Sigmoid colon (tissue), 7 donors: ENCODE measurements at regions of chr15 and their contacts with region 1.

Region 1: GRCh38 chr15:41774062-41774881 is at the start of gene MAPKBP1:
- DNase-seq: peak; percentile 98
- H3K4me3 ChIP-seq: peak within 1 kb of the TSS; percentile 65 to 87 (median 76)
- H3K27ac ChIP-seq: peak within 1 kb of the TSS; percentile 87 to 94 (median 90)
- H3K4me1 ChIP-seq: peaks cover 0 to 51% (median 45%) of the 10 kb centered on the region in 4 donors
- H3K27me3 ChIP-seq: no peaks in the 10 kb centered on the region
- CTCF ChIP-seq: peak; percentile 33 to 50 (median 46)
- EP300 ChIP-seq: peak in 1 of 4 donors; percentile 27
- POLR2A ChIP-seq: peak; percentile 25 to 33
- total RNA-seq, gene MAPKBP1: 15.0 to 42.7 (median 22.3) TPM

Region 2: DNA sequence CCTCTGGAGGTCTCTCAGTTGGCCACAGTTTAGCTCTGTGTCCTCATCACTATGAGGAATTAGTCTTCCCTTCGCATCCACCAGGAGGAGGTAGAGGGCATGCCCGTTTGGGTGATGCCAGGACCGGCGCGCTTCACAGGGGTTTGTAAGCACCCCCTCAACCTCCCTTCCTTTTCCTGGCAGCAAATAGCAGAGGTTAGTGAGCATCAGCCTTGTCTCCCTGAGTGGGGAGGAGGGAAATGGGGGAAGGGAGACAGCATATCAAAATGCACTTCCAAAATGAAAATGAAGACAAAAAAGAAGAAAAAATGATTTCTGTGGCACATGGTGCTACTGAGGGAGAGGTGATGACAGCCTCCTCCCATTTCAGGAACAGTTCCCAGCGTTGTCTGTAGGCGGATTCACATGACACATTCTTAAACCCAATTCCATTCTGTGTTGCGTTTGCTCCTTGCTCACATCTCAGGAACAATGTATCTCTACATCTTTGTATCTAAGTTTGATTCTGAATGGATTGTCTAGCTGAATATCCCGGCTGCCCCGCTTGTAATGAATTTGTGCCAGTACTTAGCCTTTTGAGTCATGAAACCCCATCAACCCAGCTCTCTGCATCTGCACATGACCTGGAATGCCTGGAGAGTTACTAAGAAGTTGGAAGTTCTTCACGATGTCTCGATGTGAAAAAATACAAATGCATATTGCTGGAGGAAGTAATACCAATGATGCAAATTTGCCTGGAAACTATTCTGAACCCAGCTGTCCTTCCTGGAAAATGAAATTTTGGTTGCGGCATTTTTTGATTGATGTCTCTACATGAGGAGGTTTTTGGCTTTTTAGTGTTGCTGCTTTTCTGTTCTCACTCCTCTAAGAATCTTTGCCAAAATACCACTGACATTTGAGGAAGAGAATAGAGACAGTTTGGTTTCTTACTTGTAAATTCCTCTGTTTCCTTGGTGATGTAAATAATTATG is 170.0 kb before region 1 on chr15:
- intact Hi-C with region 1: loop called (anchors 10 kb)
- DNase-seq: peak; percentile 81
- H3K4me3 ChIP-seq: peak overlapping the region in 3 of 4 donors; percentile 25 to 28 (median 28)
- H3K27ac ChIP-seq: peak overlapping the region in 3 of 4 donors; percentile 34 to 37 (median 37)
- H3K4me1 ChIP-seq: peaks cover 0 to 12% (median 10%) of the 10 kb centered on the region in 4 donors
- H3K27me3 ChIP-seq: no peaks in the 10 kb centered on the region
- CTCF ChIP-seq: peak; percentile 49 to 79 (median 72)
- EP300 ChIP-seq: no peak
- POLR2A ChIP-seq: no peak

Region 3: GRCh38 chr15:41660235-41661077 is 113.8 kb before region 1 on chr15 and contains the start of gene MGA:
- intact Hi-C with region 1: loop called (anchors 5 kb)
- DNase-seq: peak; percentile 95
- H3K4me3 ChIP-seq: peak within 1 kb of the TSS; percentile 41 to 62 (median 55)
- H3K27ac ChIP-seq: peak within 1 kb of the TSS; percentile 75 to 86 (median 82)
- H3K4me1 ChIP-seq: peaks cover 0 to 45% (median 29%) of the 10 kb centered on the region in 4 donors
- H3K27me3 ChIP-seq: no peaks in the 10 kb centered on the region
- CTCF ChIP-seq: no peak
- EP300 ChIP-seq: no peak
- POLR2A ChIP-seq: no peak
- total RNA-seq, gene MGA: 36.0 to 64.8 (median 60.6) TPM

Region 4: GRCh38 chr15:41811432-41812195 is 37.3 kb after region 1 on chr15:
- intact Hi-C with region 1: loop called (anchors 1 kb)
- DNase-seq: peak; percentile 91
- H3K4me3 ChIP-seq: no peak overlapping the region
- H3K27ac ChIP-seq: no peak overlapping the region
- H3K4me1 ChIP-seq: peaks cover 0 to 7% (median 5%) of the 10 kb centered on the region in 4 donors
- H3K27me3 ChIP-seq: no peaks in the 10 kb centered on the region
- CTCF ChIP-seq: peak; percentile 83 to 89 (median 85)
- EP300 ChIP-seq: no peak
- POLR2A ChIP-seq: no peak

Region 5: DNA sequence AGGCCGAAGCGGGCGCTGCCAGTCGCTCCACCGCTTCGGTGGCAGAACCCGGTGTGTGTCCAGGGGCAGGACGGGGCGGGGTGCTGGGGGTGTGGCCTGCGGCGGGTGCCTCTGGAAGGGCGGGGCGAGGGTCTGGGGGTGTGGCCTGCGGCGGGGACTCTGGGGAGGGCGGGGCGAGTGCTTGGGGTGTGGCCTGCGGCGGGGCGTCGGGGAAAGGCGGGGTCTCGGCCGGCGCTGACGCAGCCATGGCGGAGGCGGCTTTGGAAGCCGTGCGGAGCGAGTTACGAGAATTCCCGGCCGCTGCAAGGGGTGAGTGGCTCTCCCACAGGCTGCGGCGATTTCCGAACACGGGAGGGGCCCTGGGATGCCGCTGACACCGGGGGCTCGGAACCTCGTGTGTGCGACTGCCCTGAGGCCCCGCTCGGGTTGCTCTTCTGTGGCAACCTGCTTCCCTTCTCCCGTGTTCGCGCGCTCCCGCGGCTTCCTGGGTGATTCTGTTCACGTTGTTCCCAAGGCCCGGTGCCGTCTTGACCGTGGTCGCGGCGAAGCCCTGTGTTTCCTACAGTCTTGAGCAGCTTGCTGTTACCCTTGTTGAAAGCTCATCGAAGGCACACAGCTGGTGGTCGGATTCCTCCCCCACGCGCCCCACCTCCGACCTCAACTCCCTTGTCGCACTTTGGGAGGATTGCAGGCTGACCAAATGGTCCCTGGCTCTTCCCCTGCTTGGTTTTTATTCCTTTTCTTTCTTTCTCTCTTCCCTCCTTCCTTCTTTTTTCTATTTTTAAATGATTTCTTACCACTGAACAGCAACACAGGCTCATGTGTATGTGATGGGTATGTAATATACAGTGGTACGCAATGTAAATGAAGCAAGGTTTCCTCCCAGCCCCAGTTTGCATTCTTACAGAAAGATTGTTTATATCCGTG is 53.9 kb after region 1 on chr15 and contains the start of gene JMJD7:
- intact Hi-C with region 1: loop called (anchors 1 kb)
- DNase-seq: peak; percentile 97
- H3K4me3 ChIP-seq: peak within 1 kb of the TSS; percentile 54 to 84 (median 70)
- H3K27ac ChIP-seq: peak within 1 kb of the TSS; percentile 79 to 90 (median 87)
- H3K4me1 ChIP-seq: peaks cover 0 to 21% (median 18%) of the 10 kb centered on the region in 4 donors
- H3K27me3 ChIP-seq: no peaks in the 10 kb centered on the region
- CTCF ChIP-seq: no peak
- EP300 ChIP-seq: no peak
- POLR2A ChIP-seq: peak; percentile 48 to 61
- total RNA-seq, gene JMJD7: 9.7 to 14.0 (median 12.1) TPM

Region 6: GRCh38 chr15:41904541-41905005 is 130.3 kb after region 1 on chr15:
- intact Hi-C with region 1: loop called (anchors 5 kb)
- DNase-seq: peak; percentile 78
- H3K4me3 ChIP-seq: no peak overlapping the region
- H3K27ac ChIP-seq: no peak overlapping the region
- H3K4me1 ChIP-seq: peaks cover 0 to 11% (median 2%) of the 10 kb centered on the region in 4 donors
- H3K27me3 ChIP-seq: no peaks in the 10 kb centered on the region
- CTCF ChIP-seq: peak; percentile 21 to 70 (median 52)
- EP300 ChIP-seq: no peak
- POLR2A ChIP-seq: no peak

Region 7: GRCh38 chr15:41917767-41918430 is 143.6 kb after region 1 on chr15:
- intact Hi-C with region 1: no loop called
- DNase-seq: no peak
- H3K4me3 ChIP-seq: no peak overlapping the region
- H3K27ac ChIP-seq: peak overlapping the region in 3 of 4 donors; percentile 17 to 47 (median 38)
- H3K4me1 ChIP-seq: peaks cover 0 to 51% (median 32%) of the 10 kb centered on the region in 4 donors
- H3K27me3 ChIP-seq: no peaks in the 10 kb centered on the region
- CTCF ChIP-seq: no peak
- EP300 ChIP-seq: no peak
- POLR2A ChIP-seq: no peak